HEK293 (cell line): ENCODE measurements at regions of chr11 and their contacts with region 1.

Region 1: GRCh38 chr11:61816736-61817455 is at the start of gene FADS1:
- H3K4me3 ChIP-seq: peak within 1 kb of the TSS; percentile 64
- H3K27ac ChIP-seq: peak within 1 kb of the TSS; percentile 76
- H3K4me1 ChIP-seq: no peaks in the 10 kb centered on the region
- CTCF ChIP-seq: peak; percentile 95

Region 2: GRCh38 chr11:61800331-61801281 is 16.3 kb before region 1 on chr11:
- CTCF ChIA-PET with region 1: interaction called, 40 read pairs
- POLR2A ChIA-PET with region 1: interaction called, 17 read pairs
- H3K4me3 ChIP-seq: no peak overlapping the region
- H3K27ac ChIP-seq: no peak overlapping the region
- H3K4me1 ChIP-seq: 0 out of 2 replicates have a peak, but pooled peaks cover 3% of the 10 kb centered on the region
- CTCF ChIP-seq: no peak

Region 3: GRCh38 chr11:61827571-61828378 is 10.9 kb after region 1 on chr11 and contains the start of gene FADS2:
- CTCF ChIA-PET with region 1: interaction called, 8 read pairs
- POLR2A ChIA-PET with region 1: interaction called, 55 read pairs
- H3K4me3 ChIP-seq: peak within 1 kb of the TSS; percentile 62
- H3K27ac ChIP-seq: peak within 1 kb of the TSS; percentile 96
- H3K4me1 ChIP-seq: peaks cover 10% of the 10 kb centered on the region; the same call in 1 of the 2 replicates
- CTCF ChIP-seq: peak; percentile 13; the same call in 1 of the 2 replicates

Region 4: DNA sequence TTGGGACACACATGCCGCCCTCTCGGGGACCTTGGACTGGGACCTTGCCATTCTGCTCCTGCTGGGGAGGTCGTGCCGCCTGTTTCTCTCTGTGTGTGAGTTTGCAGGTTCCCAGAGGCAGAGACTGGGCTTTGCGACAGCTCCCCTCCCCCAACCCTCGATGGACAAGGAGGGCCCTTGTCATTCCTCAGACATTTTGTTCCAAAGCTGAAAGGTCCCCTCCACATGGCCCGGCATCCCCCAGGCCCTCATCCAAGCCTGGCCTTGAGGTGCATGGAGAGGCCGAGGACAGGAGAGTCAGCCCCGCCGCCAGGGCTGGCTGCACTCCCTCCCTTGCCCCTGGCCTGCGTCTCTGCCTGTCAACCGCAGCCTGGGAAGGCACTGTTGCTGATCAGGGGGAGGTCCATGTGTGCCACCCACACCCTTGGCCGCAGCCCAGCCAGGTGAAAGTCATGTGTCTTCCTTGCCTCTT is 36.8 kb after region 1 on chr11:
- CTCF ChIA-PET with region 1: no interaction called
- POLR2A ChIA-PET with region 1: no interaction called
- H3K4me3 ChIP-seq: no peak overlapping the region
- H3K27ac ChIP-seq: no peak overlapping the region
- H3K4me1 ChIP-seq: no peaks in the 10 kb centered on the region
- CTCF ChIP-seq: no peak